GM12878 (cell line): ENCODE measurements at regions of chr19 and their contacts with region 1.

Region 1: DNA sequence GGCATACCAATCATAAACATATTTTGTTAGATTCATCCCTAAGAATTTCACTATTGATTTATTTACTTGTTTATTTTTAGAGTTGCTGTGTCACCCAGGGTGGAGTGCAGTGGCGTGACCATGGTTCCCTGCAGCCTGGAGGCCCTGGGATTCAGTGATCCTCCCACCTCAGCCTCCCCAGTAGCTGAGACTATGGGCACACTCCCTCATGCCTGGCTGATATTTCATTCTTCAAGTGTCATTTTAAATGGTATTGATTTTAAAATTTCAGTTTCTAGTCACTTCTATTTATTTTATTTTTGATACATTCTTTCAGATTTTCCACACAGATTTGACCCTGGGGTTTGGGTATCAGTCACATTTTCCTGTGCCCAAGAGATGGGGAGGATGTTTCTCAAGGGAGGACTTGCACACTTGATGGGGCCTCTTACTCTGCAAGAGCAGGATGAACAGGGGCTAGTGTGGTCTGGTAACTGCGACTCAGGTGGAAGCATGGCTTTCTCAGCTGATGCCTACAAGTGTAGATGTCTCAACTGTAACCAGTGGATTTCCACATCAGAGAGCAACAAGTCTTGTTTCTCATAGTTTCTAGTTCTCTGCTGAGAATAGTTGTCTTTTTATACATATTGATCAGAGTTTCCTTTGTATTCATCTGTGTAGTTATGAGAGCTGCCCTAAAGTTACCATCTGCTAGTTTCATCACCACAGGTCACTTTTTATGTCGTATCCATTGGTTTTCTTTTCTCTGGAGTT is 40.2 kb downstream of the CCNE1 start:
- DNase-seq: peak; percentile 49
- ATAC-seq: peak; percentile 91
- H3K4me3 ChIP-seq: no peak overlapping the region
- H3K27ac ChIP-seq: peak overlapping the region; percentile 48; the same call in 1 of the 2 replicates
- H3K4me1 ChIP-seq: peaks cover 17% of the 10 kb centered on the region
- H3K27me3 ChIP-seq: no peaks in the 10 kb centered on the region
- CTCF ChIP-seq: no peak
- EP300 ChIP-seq: no peak; a peak in 1 of 4 replicates
- POLR2A ChIP-seq: no peak
- RAD21 ChIP-seq: no peak

Region 2: GRCh38 chr19:29771708-29772414 is 80.1 kb before region 1 on chr19:
- CTCF ChIA-PET with region 1: no interaction called
- POLR2A ChIA-PET with region 1: no interaction called
- RAD21 ChIA-PET with region 1: no interaction called
- SMC1A ChIA-PET with region 1: no interaction called
- in situ Hi-C with region 1: no loop called
- intact Hi-C with region 1: loop called (anchors 5 kb)
- DNase-seq: no peak
- ATAC-seq: peak; percentile 67
- H3K4me3 ChIP-seq: no peak overlapping the region
- H3K27ac ChIP-seq: no peak overlapping the region
- H3K4me1 ChIP-seq: no peaks in the 10 kb centered on the region
- H3K27me3 ChIP-seq: no peaks in the 10 kb centered on the region
- CTCF ChIP-seq: peak; percentile 55 to 62 (median 59)
- EP300 ChIP-seq: no peak
- POLR2A ChIP-seq: no peak
- RAD21 ChIP-seq: peak; percentile 54

Region 3: GRCh38 chr19:29887442-29887855 is 35.5 kb after region 1 on chr19:
- CTCF ChIA-PET with region 1: no interaction called
- POLR2A ChIA-PET with region 1: no interaction called
- RAD21 ChIA-PET with region 1: no interaction called
- SMC1A ChIA-PET with region 1: no interaction called
- in situ Hi-C with region 1: no loop called
- intact Hi-C with region 1: no loop called
- DNase-seq: no peak
- ATAC-seq: no peak; the same call in 2 of the 3 replicates
- H3K4me3 ChIP-seq: no peak overlapping the region
- H3K27ac ChIP-seq: no peak overlapping the region
- H3K4me1 ChIP-seq: peaks cover 3% of the 10 kb centered on the region; the same call in 1 of the 2 replicates
- H3K27me3 ChIP-seq: no peaks in the 10 kb centered on the region
- CTCF ChIP-seq: no peak
- EP300 ChIP-seq: no peak
- POLR2A ChIP-seq: no peak
- RAD21 ChIP-seq: no peak